ENCODE measurements at regions of chr11 and their contacts with region 1.

Region 1: DNA sequence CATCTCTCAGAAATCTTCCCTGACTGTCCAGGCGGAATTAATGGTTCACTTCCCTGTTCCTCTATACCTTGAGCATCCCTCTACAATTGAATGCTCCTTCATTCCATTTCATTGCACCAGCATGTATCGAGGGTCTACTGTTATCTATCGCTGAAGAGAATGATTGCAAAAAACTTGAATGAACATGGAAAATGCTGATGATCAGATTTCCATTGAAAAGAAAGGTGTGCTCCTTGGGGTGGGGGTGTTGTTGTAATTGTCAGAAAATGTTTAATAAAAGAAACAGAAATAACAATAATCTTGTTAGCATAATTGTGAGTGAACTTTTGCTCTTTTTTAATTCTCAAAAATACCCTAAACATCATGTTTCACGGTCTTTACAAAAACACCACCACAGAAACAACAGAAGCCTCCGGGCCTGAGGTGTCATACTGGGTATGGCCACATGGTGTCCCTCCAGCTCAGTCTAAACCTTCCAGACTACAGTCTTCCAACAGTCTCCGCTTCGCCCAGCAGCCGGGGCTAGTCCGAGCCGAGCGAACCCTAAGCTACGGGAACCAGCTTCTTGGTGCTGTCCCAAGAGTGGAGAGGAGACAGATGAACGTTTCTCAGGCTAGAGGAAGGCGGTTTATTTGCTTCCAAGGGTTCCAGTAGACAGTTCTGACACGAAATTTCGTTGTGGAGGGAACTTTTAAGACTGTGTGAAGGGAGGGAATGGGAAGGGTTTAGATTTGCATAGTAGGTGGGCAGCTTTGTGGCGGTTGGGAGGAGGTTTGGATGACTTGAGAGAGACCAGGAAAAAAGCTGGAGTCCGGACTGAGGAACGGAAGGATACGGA is 75.8 kb upstream of the ZBED5 start:
- DNase-seq: peak; percentile 91
- H3K4me3 Mint-ChIP-seq: peak overlapping the region; percentile 76
- H3K27ac Mint-ChIP-seq: peak overlapping the region; percentile 68
- H3K4me1 Mint-ChIP-seq: peaks cover 35% of the 10 kb centered on the region
- H3K27me3 Mint-ChIP-seq: no peaks in the 10 kb centered on the region
- CTCF ChIP-seq: peak; percentile 88

Region 2: DNA sequence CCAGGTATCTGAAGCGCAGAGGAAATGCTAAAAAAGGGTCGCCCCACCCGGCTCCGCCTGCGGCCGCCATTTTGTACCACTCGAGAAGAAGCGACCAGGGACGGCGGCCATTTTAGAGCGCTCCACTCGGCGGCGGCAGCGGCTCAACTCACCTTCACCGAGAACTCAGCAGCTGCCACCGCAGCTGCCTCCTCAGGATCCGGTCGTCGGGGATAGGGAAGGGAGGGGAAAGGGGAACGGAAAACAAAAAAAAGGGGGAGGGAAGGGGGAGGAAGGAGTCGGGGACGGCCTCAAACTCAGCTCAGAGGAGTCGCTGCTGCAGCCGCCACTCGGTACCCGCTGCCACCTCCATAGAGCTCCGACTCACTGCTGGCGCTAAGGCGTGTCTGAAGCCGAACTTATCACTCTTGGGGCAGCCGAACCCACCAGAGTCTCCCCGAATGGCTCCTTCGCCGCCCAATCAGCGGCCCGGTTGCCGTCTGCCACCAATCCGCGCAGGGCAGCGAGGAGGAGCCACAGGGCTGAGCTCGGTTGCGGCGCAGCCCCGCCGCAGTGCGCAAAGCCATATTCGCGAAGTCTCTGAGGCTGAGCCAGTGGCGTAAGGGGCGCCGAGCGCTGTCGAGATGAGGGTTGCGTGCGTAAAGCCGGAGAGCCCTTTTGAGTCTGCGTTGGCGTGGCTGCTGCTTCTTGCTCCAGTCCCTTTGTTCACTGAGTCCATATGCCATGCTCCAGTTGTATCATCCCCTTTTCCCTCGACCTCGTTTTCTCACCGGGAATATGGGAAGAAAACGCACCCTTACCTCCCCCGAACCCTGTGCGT is 124.9 kb before region 1 on chr11 and contains the start of gene EIF4G2:
- CTCF ChIA-PET with region 1: interaction called, 13 read pairs
- intact Hi-C with region 1: loop called (anchors 5 kb)
- DNase-seq: peak; percentile 97
- H3K4me3 Mint-ChIP-seq: peak within 1 kb of the TSS; percentile 95
- H3K27ac Mint-ChIP-seq: peak within 1 kb of the TSS; percentile 96
- H3K4me1 Mint-ChIP-seq: peaks cover 7% of the 10 kb centered on the region
- H3K27me3 Mint-ChIP-seq: no peaks in the 10 kb centered on the region
- CTCF ChIP-seq: no peak
- total RNA-seq, gene EIF4G2: 690 and 772 TPM in 2 replicates

Region 3: DNA sequence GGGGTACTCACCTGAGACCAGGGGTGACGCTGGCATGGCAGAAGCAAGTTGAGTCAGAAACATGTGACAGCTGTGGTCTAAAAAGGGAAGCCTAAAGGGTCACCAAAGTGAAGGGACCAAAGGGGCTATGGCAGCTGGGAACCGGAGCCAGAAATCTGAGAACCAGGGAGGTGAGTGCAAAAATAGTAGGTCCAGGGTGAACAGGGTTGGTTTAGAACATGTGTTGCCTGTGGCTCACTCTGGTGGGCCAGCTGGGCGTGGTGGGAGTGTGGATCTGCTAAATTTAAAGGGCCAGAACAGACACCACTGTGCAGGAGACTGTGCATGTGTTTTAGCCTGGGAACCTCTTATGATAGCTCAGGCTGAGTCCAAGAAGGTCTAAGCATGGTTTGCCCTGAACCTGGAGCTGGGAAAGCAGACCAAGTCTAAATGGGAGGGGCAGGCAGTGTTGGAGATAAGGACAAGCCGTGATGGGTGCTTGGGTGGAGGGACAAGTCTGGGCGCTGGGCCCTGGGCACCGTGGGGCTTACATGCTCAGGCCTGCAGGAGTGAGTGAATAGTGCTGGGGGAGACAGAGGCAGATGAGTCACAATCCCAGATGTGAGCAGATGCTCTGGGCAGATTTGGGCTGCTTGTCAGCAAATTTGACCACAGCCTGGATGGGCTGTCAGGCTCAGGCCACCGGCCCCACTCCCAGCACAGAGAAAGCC is 34.4 kb before region 1 on chr11:
- CTCF ChIA-PET with region 1: interaction called, 10 read pairs
- intact Hi-C with region 1: no loop called
- DNase-seq: peak; percentile 10
- H3K4me3 Mint-ChIP-seq: peak overlapping the region; percentile 48
- H3K27ac Mint-ChIP-seq: peak overlapping the region; percentile 94
- H3K4me1 Mint-ChIP-seq: peaks cover 66% of the 10 kb centered on the region
- H3K27me3 Mint-ChIP-seq: no peaks in the 10 kb centered on the region
- CTCF ChIP-seq: no peak

Region 4: DNA sequence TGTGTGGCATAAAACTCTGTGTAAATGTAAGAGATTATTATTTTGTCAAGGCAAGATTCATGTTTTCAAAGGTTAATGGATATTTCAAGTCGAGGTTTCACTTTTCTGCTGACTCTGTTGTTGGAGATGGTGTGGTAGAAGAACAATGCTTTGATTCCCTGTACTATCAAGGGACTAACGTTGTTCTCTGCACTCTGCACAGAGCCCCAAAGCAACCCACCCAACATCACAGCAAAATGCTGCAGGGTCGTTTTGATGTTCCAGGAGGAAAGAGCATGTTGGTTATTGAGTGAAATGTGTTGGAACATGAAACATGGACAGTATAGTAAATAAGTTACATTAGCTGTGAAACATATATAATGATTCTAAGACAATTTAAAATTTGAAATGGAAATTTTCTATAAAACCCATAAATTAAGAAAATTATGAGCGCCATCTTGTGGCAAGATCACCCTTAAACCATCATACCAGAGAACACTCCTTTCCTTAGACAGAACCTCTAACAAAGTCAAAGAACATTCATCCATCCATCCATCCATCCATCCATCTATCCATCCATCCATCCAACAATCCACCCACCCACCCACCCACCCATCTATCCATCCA is 88.6 kb after region 1 on chr11:
- CTCF ChIA-PET with region 1: interaction called, 30 read pairs
- intact Hi-C with region 1: loop called (anchors 1 kb)
- DNase-seq: peak; percentile 29
- H3K4me3 Mint-ChIP-seq: no peak overlapping the region
- H3K27ac Mint-ChIP-seq: no peak overlapping the region
- H3K4me1 Mint-ChIP-seq: no peaks in the 10 kb centered on the region
- H3K27me3 Mint-ChIP-seq: no peaks in the 10 kb centered on the region
- CTCF ChIP-seq: peak; percentile 32

Region 5: GRCh38 chr11:11279956-11280689 is 346.4 kb after region 1 on chr11:
- CTCF ChIA-PET with region 1: no interaction called
- intact Hi-C with region 1: no loop called
- DNase-seq: no peak
- H3K4me3 Mint-ChIP-seq: no peak overlapping the region
- H3K27ac Mint-ChIP-seq: no peak overlapping the region
- H3K4me1 Mint-ChIP-seq: no peaks in the 10 kb centered on the region
- H3K27me3 Mint-ChIP-seq: no peaks in the 10 kb centered on the region
- CTCF ChIP-seq: no peak